ENCODE measurements at regions of chr5 and their contacts with region 1.

Region 1: GRCh38 chr5:141402553-141403260 is at the start of gene PCDHGA9:
- DNase-seq: no peak
- ATAC-seq: no peak
- H3K4me3 ChIP-seq: peak within 1 kb of the TSS in 9 of 12 donors; percentile 11 to 35 (median 23)
- H3K27ac ChIP-seq: no peak within 1 kb of the TSS
- H3K4me1 ChIP-seq: peaks cover 0 to 13% (median 0%) of the 10 kb centered on the region in 12 donors
- H3K27me3 ChIP-seq: peaks cover 0 to 46% (median 0%) of the 10 kb centered on the region in 9 donors
- CTCF ChIP-seq: peak in 8 of 12 donors; percentile 9 to 32 (median 18)
- POLR2A ChIP-seq: no peak
- total RNA-seq, gene PCDHGA9: 2.3 to 9.6 (median 5.3) TPM

Region 2: DNA sequence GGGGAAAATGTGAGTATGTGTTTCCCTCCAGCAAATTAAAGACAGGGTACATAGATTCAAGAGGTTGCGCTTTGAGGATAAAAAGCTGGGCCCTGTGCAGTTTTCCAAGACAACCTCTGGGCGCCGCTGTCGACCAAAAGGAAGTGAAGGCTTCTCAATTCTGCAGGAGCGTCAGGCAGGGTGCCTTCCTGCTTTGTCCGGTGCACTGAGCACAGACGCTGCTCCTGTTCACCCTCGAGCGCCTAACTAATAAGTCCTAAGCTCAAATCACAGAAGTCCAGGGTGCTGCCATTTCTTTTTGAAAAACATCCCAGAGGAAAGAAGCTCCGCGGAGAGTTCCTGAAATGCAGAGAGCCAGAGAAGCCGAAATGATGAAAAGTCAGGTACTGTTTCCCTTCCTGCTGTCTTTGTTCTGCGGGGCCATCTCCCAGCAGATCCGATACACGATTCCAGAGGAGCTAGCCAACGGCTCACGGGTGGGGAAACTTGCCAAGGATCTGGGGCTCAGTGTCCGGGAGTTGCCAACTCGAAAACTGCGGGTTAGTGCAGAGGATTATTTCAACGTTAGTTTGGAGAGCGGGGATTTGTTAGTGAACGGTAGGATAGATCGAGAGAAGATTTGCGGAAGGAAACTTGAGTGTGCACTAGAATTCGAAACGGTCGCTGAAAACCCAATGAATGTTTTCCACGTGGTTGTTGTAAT is 52.6 kb before region 1 on chr5 and contains the start of gene PCDHGB1:
- intact Hi-C with region 1: loop called in 1 of 10 experiments (anchors 10 kb)
- DNase-seq: peak in 3 of 5 donors; percentile 52 to 71 (median 70)
- ATAC-seq: peak; percentile 71 to 83 (median 80)
- H3K4me3 ChIP-seq: peak within 1 kb of the TSS in 9 of 12 donors; percentile 17 to 39 (median 31)
- H3K27ac ChIP-seq: peak within 1 kb of the TSS in 2 of 12 donors; percentile 30 to 41
- H3K4me1 ChIP-seq: peaks cover 0 to 19% (median 2%) of the 10 kb centered on the region in 12 donors
- H3K27me3 ChIP-seq: peaks cover 0 to 21% (median 0%) of the 10 kb centered on the region in 9 donors
- CTCF ChIP-seq: peak; percentile 31 to 70 (median 49)
- POLR2A ChIP-seq: no peak
- total RNA-seq, gene PCDHGB1: 4.4 to 11.9 (median 8.6) TPM

Measured in heart left ventricle (tissue), 16 donors.